Left ventricle myocardium inferior (tissue), 1 donor: ENCODE measurements at regions of chr3 and their contacts with region 1.

Region 1: GRCh38 chr3:139329345-139329850 is 14.4 kb upstream of the MRPS22 start:
- DNase-seq: peak; percentile 85
- H3K4me3 ChIP-seq: peak overlapping the region; percentile 42
- H3K27ac ChIP-seq: no peak overlapping the region
- H3K4me1 ChIP-seq: peaks cover 8% of the 10 kb centered on the region
- H3K27me3 ChIP-seq: peaks cover 42% of the 10 kb centered on the region
- CTCF ChIP-seq: peak; percentile 98

Region 2: DNA sequence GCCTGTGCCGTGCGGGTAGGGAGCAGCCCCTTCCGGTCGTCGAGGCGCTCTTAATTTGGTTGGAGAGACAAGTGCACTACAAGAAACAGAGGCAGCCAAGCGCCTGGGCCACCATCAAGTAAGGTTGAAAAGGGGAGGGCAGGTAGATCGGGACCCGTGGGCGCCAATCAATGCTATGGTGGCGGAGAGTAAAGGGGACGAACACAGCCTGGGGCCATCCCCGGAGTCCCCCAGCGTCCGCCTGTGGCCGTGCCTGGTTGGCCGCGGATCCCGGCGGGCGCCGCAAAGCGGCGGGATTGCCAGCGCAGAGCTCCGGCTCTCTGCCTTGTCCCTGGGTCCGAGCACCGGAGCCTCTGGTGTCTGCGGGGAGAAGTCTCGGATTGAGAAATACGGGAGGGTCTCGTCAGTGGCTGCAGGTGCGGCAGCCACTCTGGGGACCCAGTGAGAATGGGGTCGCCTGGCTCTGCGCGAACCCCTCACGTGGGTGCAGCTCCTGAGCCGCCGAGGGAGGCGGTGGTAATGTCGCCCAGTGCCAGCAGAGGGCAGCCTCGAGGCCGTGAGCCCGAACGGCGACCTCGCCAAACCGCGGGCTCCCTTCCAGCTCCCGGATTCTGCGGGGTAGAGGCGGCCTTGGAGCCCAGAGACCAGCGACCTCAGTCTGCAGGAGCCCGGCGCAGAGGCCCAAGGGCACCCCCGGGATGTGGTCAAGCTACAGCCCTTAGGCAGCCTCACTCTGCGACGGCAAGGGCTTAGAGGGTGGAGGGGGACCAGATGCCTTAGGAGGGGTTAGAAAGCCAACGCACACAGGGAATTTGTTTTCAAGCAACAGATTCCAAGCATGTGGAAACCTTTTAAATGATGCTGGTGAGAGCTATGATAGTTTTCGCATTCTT is 393.3 kb before region 1 on chr3:
- intact Hi-C with region 1: loop called (anchors 5 kb)
- DNase-seq: peak; percentile 75
- H3K4me3 ChIP-seq: peak overlapping the region; percentile 58
- H3K27ac ChIP-seq: no peak overlapping the region
- H3K4me1 ChIP-seq: peaks cover 45% of the 10 kb centered on the region
- H3K27me3 ChIP-seq: peaks cover 80% of the 10 kb centered on the region
- CTCF ChIP-seq: peak; percentile 98

Region 3: GRCh38 chr3:139111392-139112229 is 217.8 kb before region 1 on chr3:
- intact Hi-C with region 1: loop called (anchors 5 kb)
- DNase-seq: peak; percentile 45
- H3K4me3 ChIP-seq: no peak overlapping the region
- H3K27ac ChIP-seq: no peak overlapping the region
- H3K4me1 ChIP-seq: peaks cover 3% of the 10 kb centered on the region
- H3K27me3 ChIP-seq: peaks cover 22% of the 10 kb centered on the region
- CTCF ChIP-seq: peak; percentile 78